WTC11 (cell line): ENCODE measurements at regions of chr3 and their contacts with region 1.

Region 1: GRCh38 chr3:43759297-43759782 is 68.6 kb downstream of the ABHD5 start:
- DNase-seq: peak; percentile 15
- ATAC-seq: peak; percentile 77
- H3K4me3 Mint-ChIP-seq: no peak overlapping the region
- H3K27ac Mint-ChIP-seq: no peak overlapping the region
- H3K4me1 Mint-ChIP-seq: peaks cover 31% of the 10 kb centered on the region
- H3K27me3 Mint-ChIP-seq: no peaks in the 10 kb centered on the region; the same call in 1 of the 2 replicates
- CTCF ChIP-seq: no peak

Region 2: DNA sequence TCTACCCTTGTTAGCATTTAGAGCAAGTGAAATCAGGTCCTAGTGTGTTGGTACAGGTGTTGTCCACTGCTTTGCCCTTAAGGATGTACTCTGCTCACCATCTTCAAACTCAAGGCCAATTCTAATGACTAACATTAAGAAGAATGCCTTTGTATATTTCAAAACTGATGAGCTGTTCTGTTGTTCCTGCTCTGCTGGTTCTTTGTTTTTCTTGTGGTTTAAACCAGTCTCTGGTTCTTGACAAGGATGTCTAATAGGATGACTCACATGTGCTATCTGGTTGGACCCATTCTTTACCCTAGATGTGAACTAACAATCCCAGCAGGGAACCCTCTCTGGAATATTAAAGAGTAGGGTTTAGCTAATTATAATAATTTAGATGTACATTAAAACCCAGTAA is 51.3 kb before region 1 on chr3:
- CTCF ChIA-PET with region 1: no interaction called
- POLR2A ChIA-PET with region 1: no interaction called
- DNase-seq: no peak
- ATAC-seq: no peak
- H3K4me3 Mint-ChIP-seq: no peak overlapping the region
- H3K27ac Mint-ChIP-seq: no peak overlapping the region
- H3K4me1 Mint-ChIP-seq: no peaks in the 10 kb centered on the region
- H3K27me3 Mint-ChIP-seq: no peaks in the 10 kb centered on the region
- CTCF ChIP-seq: no peak

Region 3: DNA sequence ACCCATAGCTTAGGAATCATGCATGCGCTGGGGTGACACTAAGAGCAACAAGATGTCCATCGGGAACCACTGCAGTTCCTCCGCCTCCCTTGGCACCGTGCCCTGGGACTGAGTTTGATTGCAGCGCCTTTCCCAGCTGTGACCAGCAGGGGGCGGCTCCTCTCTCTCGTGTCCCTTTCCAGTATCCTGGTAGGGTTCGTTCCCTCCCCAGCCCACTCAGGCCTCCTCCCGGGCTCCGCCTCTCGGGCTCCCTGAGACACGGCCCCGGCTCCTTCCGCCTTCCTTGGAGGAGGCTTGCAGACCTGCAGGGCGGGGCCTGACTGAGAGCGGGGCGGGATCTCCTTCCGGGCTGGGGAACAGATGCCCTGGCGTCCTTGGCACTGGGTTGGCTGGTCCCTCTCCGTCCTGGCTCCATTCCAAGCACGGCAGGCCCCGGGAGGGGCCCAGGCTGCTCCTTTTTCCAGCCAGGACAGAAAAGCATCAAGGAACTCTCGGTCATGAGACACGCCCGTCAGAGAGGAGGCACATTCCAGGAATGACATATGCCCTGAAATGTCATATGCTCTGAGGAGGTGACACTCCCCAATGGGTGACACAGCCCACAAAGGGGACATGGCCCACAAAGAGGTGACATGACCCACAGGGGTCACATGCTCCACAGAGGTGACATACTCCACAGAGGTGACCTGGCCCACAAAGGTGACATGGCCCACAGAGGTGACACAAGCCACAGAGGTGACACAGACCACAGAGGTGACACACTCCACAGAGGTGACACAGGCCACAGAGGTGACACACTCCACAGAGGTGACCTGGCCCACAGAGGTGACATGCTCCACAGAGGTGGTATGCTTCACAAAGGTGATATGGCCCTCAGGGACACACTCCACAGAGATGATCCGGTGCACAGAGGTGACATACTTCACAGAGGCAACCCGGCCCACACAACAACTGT is 10.4 kb after region 1 on chr3:
- CTCF ChIA-PET with region 1: interaction called, 10 read pairs
- POLR2A ChIA-PET with region 1: no interaction called
- DNase-seq: peak; percentile 99
- ATAC-seq: peak; percentile 99
- H3K4me3 Mint-ChIP-seq: peak overlapping the region; percentile 50
- H3K27ac Mint-ChIP-seq: no peak overlapping the region; the same call in 1 of the 2 replicates
- H3K4me1 Mint-ChIP-seq: peaks cover 12% of the 10 kb centered on the region
- H3K27me3 Mint-ChIP-seq: peaks cover 5% of the 10 kb centered on the region
- CTCF ChIP-seq: peak; percentile 95